Esophagus muscularis mucosa (tissue), 4 donors: ENCODE measurements at regions of chr5 and their contacts with region 1.

Region 1: GRCh38 chr5:157312492-157312891 is 46.6 kb downstream of the CYFIP2 start:
- DNase-seq: no peak
- H3K4me3 ChIP-seq: no peak overlapping the region
- H3K27ac ChIP-seq: no peak overlapping the region
- H3K4me1 ChIP-seq: no peaks in the 10 kb centered on the region
- H3K27me3 ChIP-seq: no peaks in the 10 kb centered on the region
- CTCF ChIP-seq: peak; percentile 50 to 67 (median 56)
- EP300 ChIP-seq: no peak
- POLR2A ChIP-seq: no peak

Region 2: DNA sequence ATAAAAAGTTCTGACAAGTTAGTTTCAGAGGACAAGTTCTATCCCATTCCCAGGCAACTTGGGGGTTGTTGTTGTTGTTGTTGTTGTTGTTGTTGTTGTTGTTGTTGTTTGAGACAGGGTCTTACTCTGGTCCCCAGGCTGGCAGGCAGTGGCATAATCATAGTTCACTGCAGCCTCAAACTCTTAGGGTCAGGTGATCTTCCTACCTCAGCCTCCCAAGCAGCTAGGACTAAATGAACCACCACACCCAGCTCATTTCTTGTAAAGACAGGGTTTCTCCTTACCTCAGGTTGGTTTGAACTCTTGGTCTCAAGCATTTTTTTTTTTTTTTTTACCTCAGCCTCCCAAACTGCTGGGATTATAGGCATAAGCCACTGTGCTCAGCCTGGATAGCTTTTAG is 447.1 kb before region 1 on chr5:
- intact Hi-C with region 1: no loop called
- DNase-seq: no peak
- H3K4me3 ChIP-seq: no peak overlapping the region
- H3K27ac ChIP-seq: no peak overlapping the region
- H3K4me1 ChIP-seq: no peaks in the 10 kb centered on the region
- H3K27me3 ChIP-seq: no peaks in the 10 kb centered on the region
- CTCF ChIP-seq: no peak
- EP300 ChIP-seq: no peak
- POLR2A ChIP-seq: no peak

Region 3: DNA sequence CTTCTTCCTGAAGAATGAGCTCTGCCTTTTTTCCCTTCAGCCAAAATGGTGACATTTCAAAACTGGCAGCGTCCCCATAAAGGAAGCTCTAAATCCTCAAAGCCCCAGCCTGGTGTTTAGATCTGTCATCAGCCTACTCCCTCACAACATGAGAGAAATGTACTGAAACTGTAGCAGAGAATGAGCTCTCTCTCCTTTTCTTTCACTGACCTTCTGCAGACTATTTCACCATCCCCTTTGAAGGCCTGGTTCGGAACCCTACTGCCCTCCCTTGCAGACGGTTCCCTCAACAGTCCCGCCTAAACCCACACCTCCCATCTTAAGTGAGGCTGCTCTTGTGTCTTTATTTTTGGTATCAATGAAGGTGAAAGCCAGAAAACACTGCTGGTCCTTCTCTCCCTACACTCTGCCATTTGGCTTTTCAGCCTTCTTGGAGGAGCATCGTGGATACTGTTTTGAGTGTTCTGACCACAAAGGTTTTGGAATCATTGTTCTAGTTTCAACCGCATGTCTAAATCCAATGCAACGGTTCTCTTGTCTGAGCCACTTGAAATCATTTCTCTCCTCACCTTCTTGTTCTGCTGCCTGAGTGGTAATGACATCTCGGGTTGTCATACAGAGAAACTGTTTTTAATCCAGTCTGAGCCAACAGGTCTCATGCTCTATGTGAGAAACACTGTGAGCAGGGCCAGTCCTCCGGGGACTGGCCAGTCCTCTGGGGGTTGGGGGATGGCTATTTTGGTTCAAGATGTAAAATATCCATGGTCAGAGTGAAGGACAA is 92.8 kb before region 1 on chr5:
- intact Hi-C with region 1: no loop called
- DNase-seq: no peak
- H3K4me3 ChIP-seq: no peak overlapping the region
- H3K27ac ChIP-seq: no peak overlapping the region
- H3K4me1 ChIP-seq: peaks cover 0 to 7% (median 0%) of the 10 kb centered on the region in 4 donors
- H3K27me3 ChIP-seq: no peaks in the 10 kb centered on the region
- CTCF ChIP-seq: no peak
- EP300 ChIP-seq: no peak
- POLR2A ChIP-seq: no peak

Region 4: DNA sequence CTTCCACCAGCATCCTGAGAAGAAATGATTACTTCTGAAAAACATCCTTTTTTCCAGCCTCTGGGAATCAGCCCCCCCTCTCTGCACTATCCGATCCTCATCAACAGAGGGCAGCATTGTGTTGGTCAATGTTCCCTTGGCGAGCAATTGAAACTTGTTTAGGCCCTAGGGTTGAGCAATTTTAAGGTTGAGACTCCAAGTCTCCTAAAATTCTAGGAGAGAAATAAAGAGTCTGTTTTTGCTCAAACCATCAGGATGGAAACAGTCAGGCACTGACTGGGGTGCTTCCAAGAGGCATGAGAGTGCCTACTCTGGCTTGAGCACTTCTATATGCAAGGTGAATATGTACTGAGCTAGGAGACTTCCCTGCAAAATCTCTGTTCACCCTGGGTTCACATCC is 58.9 kb before region 1 on chr5:
- intact Hi-C with region 1: loop called (anchors 2 kb)
- DNase-seq: peak; percentile 90
- H3K4me3 ChIP-seq: no peak overlapping the region
- H3K27ac ChIP-seq: no peak overlapping the region
- H3K4me1 ChIP-seq: peaks cover 0 to 3% (median 0%) of the 10 kb centered on the region in 4 donors
- H3K27me3 ChIP-seq: no peaks in the 10 kb centered on the region
- CTCF ChIP-seq: peak; percentile 71 to 86 (median 72)
- EP300 ChIP-seq: no peak
- POLR2A ChIP-seq: no peak